Heart left ventricle (tissue), 16 donors: ENCODE measurements at regions of chr17 and their contacts with region 1.

Region 1: GRCh38 chr17:7561028-7561575 is 617 bp upstream of the SENP3 start:
- DNase-seq: peak; percentile 90 to 94 (median 92)
- ATAC-seq: peak; percentile 67 to 80 (median 77)
- H3K4me3 ChIP-seq: peak overlapping the region; percentile 58 to 98 (median 93)
- H3K27ac ChIP-seq: peak overlapping the region; percentile 80 to 98 (median 94)
- H3K4me1 ChIP-seq: peaks cover 11 to 75% (median 57%) of the 10 kb centered on the region in 12 donors
- H3K27me3 ChIP-seq: no peaks in the 10 kb centered on the region
- CTCF ChIP-seq: peak; percentile 78 to 90 (median 86)
- POLR2A ChIP-seq: no peak

Region 2: GRCh38 chr17:7403977-7404736 is 156.9 kb before region 1 on chr17 and contains the start of gene TMEM256:
- intact Hi-C with region 1: loop called in 1 of 10 experiments (anchors 1 kb)
- DNase-seq: peak; percentile 99
- ATAC-seq: peak; percentile 93 to 97 (median 96)
- H3K4me3 ChIP-seq: peak within 1 kb of the TSS; percentile 49 to 88 (median 72)
- H3K27ac ChIP-seq: peak within 1 kb of the TSS; percentile 83 to 98 (median 92)
- H3K4me1 ChIP-seq: peaks cover 5 to 34% (median 17%) of the 10 kb centered on the region in 12 donors
- H3K27me3 ChIP-seq: peaks cover 0 to 5% (median 0%) of the 10 kb centered on the region in 9 donors
- CTCF ChIP-seq: no peak
- POLR2A ChIP-seq: peak; percentile 94 to 99
- total RNA-seq, gene TMEM256: 51.9 to 78.7 (median 69.5) TPM

Region 3: GRCh38 chr17:7435221-7435675 is 125.9 kb before region 1 on chr17 and contains the start of gene TMEM102:
- intact Hi-C with region 1: loop called (anchors 1 to 5 kb)
- DNase-seq: peak; percentile 95 to 97 (median 95)
- ATAC-seq: peak; percentile 87 to 94 (median 90)
- H3K4me3 ChIP-seq: peak within 1 kb of the TSS; percentile 9 to 75 (median 53)
- H3K27ac ChIP-seq: peak within 1 kb of the TSS in 11 of 12 donors; percentile 3 to 91 (median 52)
- H3K4me1 ChIP-seq: peaks cover 4 to 56% (median 40%) of the 10 kb centered on the region in 12 donors
- H3K27me3 ChIP-seq: peaks cover 0 to 35% (median 8%) of the 10 kb centered on the region in 9 donors
- CTCF ChIP-seq: peak in 1 of 12 donors; percentile 7
- POLR2A ChIP-seq: peak in 1 of 2 donors; percentile 49
- total RNA-seq, gene TMEM102: 1.7 to 6.8 (median 4.0) TPM

Region 4: DNA sequence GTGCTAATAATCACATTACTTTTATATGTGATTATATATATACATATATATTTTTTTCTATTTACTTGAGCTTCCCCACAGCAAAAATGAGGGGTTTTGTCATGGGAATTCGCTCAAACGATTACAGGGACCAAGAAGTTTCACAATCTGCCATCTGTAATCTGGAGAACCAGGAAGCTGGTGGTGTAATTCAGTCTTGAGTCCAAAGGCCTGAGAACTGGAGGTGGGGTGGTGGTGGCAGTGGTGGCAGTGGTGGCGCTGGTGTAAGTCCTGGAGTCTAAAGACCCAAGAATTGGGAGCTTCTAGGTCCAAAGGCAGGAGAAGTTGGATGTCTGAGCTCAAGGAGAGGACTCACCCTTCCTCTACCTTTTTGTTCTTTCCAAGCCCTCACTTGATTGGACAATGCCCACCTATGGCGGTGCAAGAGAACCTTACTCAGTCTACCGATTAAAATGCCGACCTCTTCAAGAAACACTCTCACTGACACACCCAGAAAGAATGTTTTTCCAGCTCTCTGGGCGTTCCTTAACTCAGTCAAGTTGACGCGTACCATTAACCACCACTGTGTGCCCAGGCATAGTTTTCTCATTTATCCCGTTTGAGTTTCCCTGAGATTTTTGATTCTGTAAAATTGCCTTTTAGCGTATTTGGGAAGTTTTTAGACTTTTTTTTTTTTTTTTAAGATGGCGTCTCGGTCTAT is 45.0 kb before region 1 on chr17:
- intact Hi-C with region 1: loop called (anchors 1 to 5 kb)
- DNase-seq: no peak
- ATAC-seq: peak in 1 of 4 donors; percentile 21
- H3K4me3 ChIP-seq: no peak overlapping the region
- H3K27ac ChIP-seq: no peak overlapping the region
- H3K4me1 ChIP-seq: peaks cover 0 to 15% (median 0%) of the 10 kb centered on the region in 12 donors
- H3K27me3 ChIP-seq: no peaks in the 10 kb centered on the region
- CTCF ChIP-seq: no peak
- POLR2A ChIP-seq: no peak

Region 5: GRCh38 chr17:7523033-7523432 is 38.1 kb before region 1 on chr17:
- intact Hi-C with region 1: loop called in 2 of 10 experiments (anchors 2 to 5 kb)
- DNase-seq: peak in 4 of 5 donors; percentile 31 to 43 (median 35)
- ATAC-seq: peak in 2 of 4 donors; percentile 33 to 36
- H3K4me3 ChIP-seq: no peak overlapping the region
- H3K27ac ChIP-seq: no peak overlapping the region
- H3K4me1 ChIP-seq: no peaks in the 10 kb centered on the region
- H3K27me3 ChIP-seq: no peaks in the 10 kb centered on the region
- CTCF ChIP-seq: peak; percentile 29 to 62 (median 44)
- POLR2A ChIP-seq: no peak

Region 6: GRCh38 chr17:7572588-7573323 is 11.7 kb after region 1 on chr17:
- intact Hi-C with region 1: loop called in 2 of 10 experiments (anchors 1 kb)
- DNase-seq: peak; percentile 99 to 100 (median 99)
- ATAC-seq: peak; percentile 92 to 96 (median 96)
- H3K4me3 ChIP-seq: peak overlapping the region; percentile 77 to 100 (median 100)
- H3K27ac ChIP-seq: peak overlapping the region; percentile 80 to 100 (median 98)
- H3K4me1 ChIP-seq: peaks cover 4 to 50% (median 32%) of the 10 kb centered on the region in 12 donors
- H3K27me3 ChIP-seq: no peaks in the 10 kb centered on the region
- CTCF ChIP-seq: no peak
- POLR2A ChIP-seq: peak; percentile 95 to 99

Region 7: DNA sequence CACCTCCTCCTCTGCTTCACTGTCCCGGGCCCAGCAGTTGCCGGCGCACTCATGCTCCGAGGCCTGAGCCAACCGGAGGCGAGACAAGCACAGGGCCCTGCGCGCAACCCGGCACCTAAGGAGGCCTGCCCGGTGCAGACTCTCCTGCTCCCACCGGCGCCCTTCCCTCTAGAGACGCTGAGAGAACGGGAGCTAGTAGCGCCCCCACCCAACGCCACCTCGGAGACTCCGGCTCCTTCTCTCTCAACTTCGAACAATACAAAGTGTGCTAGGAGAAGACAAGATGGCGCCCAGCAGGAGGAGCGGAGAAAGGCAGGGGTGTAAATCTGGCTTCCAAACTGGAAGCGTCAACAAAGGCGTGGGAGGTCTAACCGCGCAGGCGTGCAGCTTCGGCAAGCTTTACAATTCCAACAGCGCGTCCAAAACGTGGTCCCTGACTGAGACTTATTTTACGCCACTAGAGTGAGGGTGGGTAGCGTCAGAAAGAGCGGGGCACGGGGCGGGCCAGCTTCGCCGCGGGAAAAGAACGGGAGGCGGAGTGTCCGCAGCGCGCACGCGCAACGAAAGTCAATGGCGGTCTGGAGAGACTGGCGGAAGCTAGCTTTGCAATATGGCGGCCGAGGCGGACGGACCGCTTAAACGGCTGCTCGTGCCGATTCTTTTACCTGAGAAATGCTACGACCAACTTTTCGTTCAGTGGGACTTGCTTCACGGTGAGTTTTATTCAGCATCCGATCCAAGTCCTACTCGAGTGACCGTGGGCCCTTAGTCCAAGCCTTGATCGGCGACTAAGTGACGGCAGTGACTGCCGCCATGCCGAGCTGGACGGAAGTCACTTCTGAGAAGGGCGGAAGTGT is 22.4 kb after region 1 on chr17 and contains the start of gene MPDU1:
- intact Hi-C with region 1: no loop called
- DNase-seq: peak; percentile 97 to 99 (median 98)
- ATAC-seq: peak; percentile 84 to 93 (median 87)
- H3K4me3 ChIP-seq: peak within 1 kb of the TSS; percentile 41 to 77 (median 67)
- H3K27ac ChIP-seq: peak within 1 kb of the TSS; percentile 88 to 98 (median 94)
- H3K4me1 ChIP-seq: peaks cover 4 to 75% (median 43%) of the 10 kb centered on the region in 12 donors
- H3K27me3 ChIP-seq: no peaks in the 10 kb centered on the region
- CTCF ChIP-seq: peak in 2 of 12 donors; percentile 3 to 18
- POLR2A ChIP-seq: peak in 1 of 2 donors; percentile 32
- total RNA-seq, gene MPDU1: 18.4 to 90.1 (median 25.4) TPM

Region 8: DNA sequence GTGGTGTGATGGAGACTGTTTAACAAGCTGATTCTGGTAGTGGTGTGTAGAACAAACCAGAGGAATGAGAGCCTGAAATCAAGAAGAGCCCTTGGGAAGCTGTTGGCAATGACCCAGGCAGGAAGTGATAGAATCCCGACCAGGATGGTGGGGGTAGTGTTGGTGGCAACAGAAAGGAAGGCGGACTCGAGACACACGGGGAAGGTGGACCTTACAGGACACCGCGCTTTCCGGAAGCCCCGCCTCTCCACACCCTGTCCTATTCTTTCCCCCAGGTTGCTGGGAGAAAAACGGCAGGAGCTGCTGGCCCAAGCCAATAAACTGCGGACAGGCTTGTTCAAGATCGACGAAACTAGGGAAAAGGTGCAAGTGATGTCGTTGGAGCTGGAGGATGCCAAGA is 242.9 kb after region 1 on chr17:
- intact Hi-C with region 1: no loop called
- DNase-seq: no peak
- ATAC-seq: peak in 1 of 4 donors; percentile 20
- H3K4me3 ChIP-seq: no peak overlapping the region
- H3K27ac ChIP-seq: no peak overlapping the region
- H3K4me1 ChIP-seq: no peaks in the 10 kb centered on the region
- H3K27me3 ChIP-seq: peaks cover 0 to 5% (median 0%) of the 10 kb centered on the region in 9 donors
- CTCF ChIP-seq: no peak
- POLR2A ChIP-seq: no peak